Activated CD4-positive, alpha-beta T cell treated with anti-CD3 and anti-CD28 coated beads for 36 hours (primary cell): ENCODE measurements at regions of chr12 and their contacts with region 1.

Region 1: GRCh38 chr12:47216150-47216677 is 136.5 kb upstream of the AMIGO2 start:
- DNase-seq: peak; percentile 81
- ATAC-seq: peak; percentile 43
- H3K4me3 Mint-ChIP-seq: peak overlapping the region; percentile 89
- H3K27ac Mint-ChIP-seq: peak overlapping the region; percentile 96
- H3K4me1 Mint-ChIP-seq: peaks cover 38% of the 10 kb centered on the region
- H3K27me3 Mint-ChIP-seq: no peaks in the 10 kb centered on the region

Region 2: DNA sequence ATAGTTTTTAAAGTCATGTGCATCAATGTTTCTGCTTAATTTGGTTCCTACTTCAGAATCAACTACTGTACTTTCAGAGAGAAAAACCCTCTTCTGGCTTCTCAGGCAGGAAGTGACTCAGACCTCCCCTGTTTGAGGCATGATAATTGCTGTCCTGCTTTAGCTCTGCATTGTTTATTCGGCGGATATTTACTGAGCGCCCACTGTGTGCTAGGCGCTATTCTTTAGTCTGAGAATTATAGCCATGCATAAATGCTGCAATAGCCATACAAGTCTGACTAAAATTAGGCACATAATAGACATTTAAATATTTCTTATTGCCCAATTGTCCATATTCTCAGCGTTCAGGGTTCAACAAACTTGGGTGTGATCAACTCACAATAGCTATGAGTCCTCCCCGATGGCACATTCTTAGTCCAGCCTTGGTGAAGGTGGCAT is 130.4 kb before region 1 on chr12:
- CTCF ChIA-PET with region 1: interaction called, 5 read pairs
- POLR2A ChIA-PET with region 1: no interaction called
- intact Hi-C with region 1: loop called in 1 of 2 experiments (anchors 2 kb)
- DNase-seq: peak; percentile 58
- ATAC-seq: peak; percentile 82
- H3K4me3 Mint-ChIP-seq: no peak overlapping the region
- H3K27ac Mint-ChIP-seq: peak overlapping the region; percentile 30
- H3K4me1 Mint-ChIP-seq: peaks cover 60% of the 10 kb centered on the region
- H3K27me3 Mint-ChIP-seq: no peaks in the 10 kb centered on the region

Region 3: DNA sequence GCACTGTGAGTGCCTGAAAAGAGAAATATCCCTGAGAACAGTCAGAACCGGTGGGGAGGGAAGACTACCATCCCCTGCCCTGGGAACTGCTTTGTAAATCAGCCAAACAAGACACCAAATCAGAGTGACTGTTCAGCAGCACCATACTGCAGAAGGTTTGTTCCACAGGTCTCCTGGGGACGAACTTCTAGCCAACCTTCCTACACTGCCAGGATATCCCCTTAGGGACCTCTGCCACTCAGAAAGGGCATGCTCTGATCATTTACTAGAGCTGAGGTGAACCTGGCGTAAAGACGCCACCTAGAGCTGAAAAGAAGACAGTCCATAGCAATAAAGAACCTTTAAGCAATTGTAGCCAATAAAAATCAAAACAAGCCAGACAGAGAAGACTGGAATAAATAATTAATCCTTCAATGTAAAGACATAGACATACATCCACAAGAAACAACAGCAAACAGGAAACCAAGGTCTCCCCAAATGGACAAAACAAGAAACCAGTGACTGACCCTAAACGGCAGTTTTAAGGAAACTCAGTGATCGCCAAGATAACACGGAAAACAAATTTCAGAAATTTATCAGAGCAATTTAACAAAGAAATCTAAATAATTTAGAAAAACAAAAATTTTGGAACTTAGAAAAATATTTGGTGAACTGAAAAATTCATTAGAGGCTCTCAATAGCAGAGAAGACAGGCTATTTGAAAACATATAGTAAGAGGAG is 91.6 kb after region 1 on chr12:
- CTCF ChIA-PET with region 1: interaction called, 5 read pairs
- POLR2A ChIA-PET with region 1: interaction called, 9 read pairs
- intact Hi-C with region 1: loop called (anchors 1 kb)
- DNase-seq: peak; percentile 73
- ATAC-seq: peak; percentile 84
- H3K4me3 Mint-ChIP-seq: peak overlapping the region; percentile 77
- H3K27ac Mint-ChIP-seq: peak overlapping the region; percentile 96
- H3K4me1 Mint-ChIP-seq: peaks cover 70% of the 10 kb centered on the region
- H3K27me3 Mint-ChIP-seq: no peaks in the 10 kb centered on the region